ENCODE measurements at regions of chrX and their contacts with region 1.

Region 1: GRCh38 chrX:68183612-68184214 is 249.6 kb downstream of the OPHN1 start:
- DNase-seq: peak; percentile 72
- ATAC-seq: no peak; the same call in 1 of the 2 replicates
- H3K4me3 ChIP-seq: no peak overlapping the region
- H3K27ac ChIP-seq: no peak overlapping the region
- H3K4me1 ChIP-seq: peaks cover 26% of the 10 kb centered on the region
- H3K27me3 ChIP-seq: no peaks in the 10 kb centered on the region
- CTCF ChIP-seq: peak; percentile 67

Region 2: GRCh38 chrX:68462653-68463052 is 278.9 kb after region 1 on chrX:
- CTCF ChIA-PET with region 1: no interaction called
- POLR2A ChIA-PET with region 1: no interaction called
- intact Hi-C with region 1: loop called (anchors 5 kb)
- DNase-seq: peak; percentile 57
- ATAC-seq: peak; percentile 45
- H3K4me3 ChIP-seq: no peak overlapping the region
- H3K27ac ChIP-seq: peak overlapping the region; percentile 28
- H3K4me1 ChIP-seq: peaks cover 12% of the 10 kb centered on the region
- H3K27me3 ChIP-seq: no peaks in the 10 kb centered on the region
- CTCF ChIP-seq: peak; percentile 63

Region 3: GRCh38 chrX:68807818-68808217 is 624.1 kb after region 1 on chrX:
- CTCF ChIA-PET with region 1: no interaction called
- POLR2A ChIA-PET with region 1: no interaction called
- intact Hi-C with region 1: loop called (anchors 5 kb)
- DNase-seq: peak; percentile 59
- ATAC-seq: peak; percentile 67
- H3K4me3 ChIP-seq: no peak overlapping the region
- H3K27ac ChIP-seq: no peak overlapping the region
- H3K4me1 ChIP-seq: no peaks in the 10 kb centered on the region
- H3K27me3 ChIP-seq: peaks cover 10% of the 10 kb centered on the region; the same call in 1 of the 2 replicates
- CTCF ChIP-seq: peak; percentile 60

Measured in PC-3 (cell line).